ENCODE measurements at regions of chr6 and their contacts with region 1.

Region 1: DNA sequence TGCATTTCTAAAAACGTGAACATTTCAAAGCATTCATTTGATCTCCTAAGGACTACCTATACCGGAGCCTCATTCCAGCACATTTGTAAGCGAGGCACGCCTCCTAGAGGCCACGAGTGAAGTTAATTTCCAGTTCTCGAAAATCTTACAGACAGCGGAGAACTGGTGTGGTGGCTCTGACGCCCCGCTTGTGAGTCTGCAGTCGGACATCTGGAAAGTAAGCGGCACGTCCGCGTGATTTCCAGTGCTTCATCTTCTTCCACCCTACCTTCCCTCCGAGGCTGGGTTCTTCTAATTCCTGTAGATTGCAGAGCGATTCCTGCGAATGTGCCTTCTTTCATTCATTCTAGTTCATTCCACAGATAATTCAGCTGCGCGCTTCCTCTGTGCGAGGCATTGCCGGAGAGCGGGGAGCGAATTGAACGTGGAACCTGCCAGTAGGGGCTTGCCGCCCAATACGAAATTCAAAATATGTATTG is 810 bp upstream of the PRIM2 start:
- DNase-seq: peak; percentile 75 to 94
- H3K4me3 ChIP-seq: peak overlapping the region; percentile 41
- CTCF ChIP-seq: peak in 1 of 3 donors; percentile 84
- POLR2A ChIP-seq: no peak

Region 2: DNA sequence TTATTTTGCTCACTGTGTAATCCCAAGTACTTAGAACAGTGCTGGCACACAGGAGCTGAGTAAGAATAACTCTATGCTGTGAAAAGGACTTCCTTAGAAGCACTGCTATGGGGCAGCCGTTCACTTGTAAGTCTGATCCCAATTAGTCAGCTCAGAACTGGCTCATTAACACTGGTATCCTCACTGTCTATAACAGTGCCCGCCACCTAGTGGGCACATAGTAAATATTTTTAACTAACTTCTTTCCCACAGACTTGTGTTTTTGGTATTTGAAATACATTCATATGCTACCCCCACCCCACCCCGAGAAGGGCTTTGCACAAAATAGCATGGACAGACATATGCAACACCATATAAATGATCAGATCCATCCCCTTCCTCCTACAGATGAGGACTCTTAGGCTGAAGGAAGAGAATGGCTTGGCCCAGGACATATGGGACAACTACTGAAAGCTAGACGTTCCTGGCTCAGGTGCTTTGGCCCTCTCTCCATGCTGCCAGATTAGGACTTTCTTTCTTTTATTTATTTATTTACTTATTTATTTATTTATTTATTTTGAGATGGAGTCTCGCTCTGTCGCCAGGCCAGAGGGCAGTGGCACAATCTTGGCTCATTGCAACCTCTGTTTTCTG is 721.0 kb before region 1 on chr6:
- intact Hi-C with region 1: loop called (anchors 5 kb)
- DNase-seq: no peak
- H3K4me3 ChIP-seq: no peak overlapping the region
- CTCF ChIP-seq: no peak
- POLR2A ChIP-seq: no peak

Region 3: GRCh38 chr6:56902641-56903464 is 413.8 kb before region 1 on chr6:
- intact Hi-C with region 1: loop called (anchors 5 kb)
- DNase-seq: no peak
- H3K4me3 ChIP-seq: no peak overlapping the region
- CTCF ChIP-seq: peak in 1 of 3 donors; percentile 22
- POLR2A ChIP-seq: no peak

Region 4: DNA sequence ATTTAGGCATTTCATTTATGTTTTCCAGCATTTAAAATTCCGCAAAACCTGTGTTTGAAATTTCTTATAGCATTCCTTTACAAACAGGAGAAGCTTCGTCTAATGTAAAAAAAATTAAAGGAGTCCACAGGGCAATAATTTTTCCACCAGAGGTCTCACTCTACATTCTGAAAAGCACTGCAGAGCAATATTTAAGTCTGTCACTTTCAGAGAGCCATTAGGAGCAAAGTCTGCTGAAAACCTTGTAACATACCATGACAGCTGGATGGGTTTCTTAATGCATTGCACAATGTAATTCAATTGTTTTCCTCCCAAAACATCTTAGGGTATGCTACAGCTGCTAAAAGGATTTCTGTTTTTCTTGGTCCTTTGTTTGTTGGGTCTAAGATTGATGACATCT is 126.5 kb before region 1 on chr6:
- intact Hi-C with region 1: loop called (anchors 10 kb)
- DNase-seq: no peak
- H3K4me3 ChIP-seq: no peak overlapping the region
- CTCF ChIP-seq: no peak
- POLR2A ChIP-seq: no peak

Region 5: GRCh38 chr6:57262901-57263694 is 53.5 kb before region 1 on chr6:
- intact Hi-C with region 1: no loop called
- DNase-seq: no peak
- H3K4me3 ChIP-seq: no peak overlapping the region
- CTCF ChIP-seq: no peak
- POLR2A ChIP-seq: no peak

Region 6: DNA sequence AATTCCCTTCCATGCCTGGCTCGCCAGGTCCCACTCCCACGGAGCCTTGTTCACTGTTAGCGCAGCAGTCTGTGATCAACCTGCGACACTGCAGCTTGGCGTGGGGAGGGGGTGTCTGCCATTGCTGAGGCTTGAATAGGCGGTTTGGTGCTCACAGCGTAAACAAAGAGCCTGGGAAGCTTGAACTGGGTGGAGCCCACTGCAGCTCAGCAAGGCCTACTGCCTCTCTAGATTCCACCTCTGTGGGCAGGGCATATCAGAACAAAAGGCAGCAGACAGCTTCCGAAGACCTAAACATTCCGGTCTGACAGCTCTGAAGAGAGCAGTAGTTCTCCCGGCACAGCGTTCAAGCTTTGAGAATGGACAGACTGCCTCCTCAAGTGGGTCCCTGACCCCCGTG is 28.5 kb before region 1 on chr6:
- intact Hi-C with region 1: no loop called
- DNase-seq: no peak
- H3K4me3 ChIP-seq: no peak overlapping the region
- CTCF ChIP-seq: no peak
- POLR2A ChIP-seq: no peak

Measured in lower leg skin (tissue), 4 donors.